PC-9 (cell line): ENCODE measurements at regions of chr6 and their contacts with region 1.

Region 1: DNA sequence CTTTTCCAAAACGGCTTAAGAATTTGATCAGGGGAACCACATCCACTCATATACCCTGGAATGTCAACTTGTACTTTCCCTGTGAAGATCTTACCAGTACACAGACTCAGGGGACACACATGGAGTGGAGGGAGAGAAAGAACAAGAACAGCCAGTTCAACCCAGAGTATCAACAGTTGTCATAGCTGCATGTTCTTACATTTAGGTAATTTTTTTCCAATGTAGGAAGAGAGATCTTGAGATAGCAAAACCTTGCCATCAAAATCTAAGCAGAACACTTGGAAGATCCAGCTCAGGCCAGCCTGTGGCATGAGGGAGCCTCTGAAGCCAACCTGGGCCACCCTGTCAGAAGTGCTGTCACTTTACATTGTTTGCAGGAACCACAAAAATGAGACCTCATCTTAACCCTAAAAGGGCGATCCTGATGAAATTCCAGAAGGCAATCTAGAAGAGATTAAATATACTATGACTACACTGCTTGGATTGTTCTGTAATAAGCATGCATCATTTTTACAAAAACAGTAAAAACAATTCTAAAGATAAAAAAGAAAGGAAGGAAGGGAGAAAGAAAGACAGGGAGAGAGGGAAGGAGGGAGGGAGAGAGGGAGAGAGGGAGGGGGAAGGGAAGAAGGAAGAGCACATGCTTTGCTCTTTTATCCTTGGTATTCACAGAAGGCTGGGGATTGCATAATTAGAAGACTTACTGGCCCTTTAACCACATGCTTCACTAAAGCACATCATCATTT is 124.7 kb upstream of the TCF21 start:
- DNase-seq: peak; percentile 43 to 61
- H3K4me3 ChIP-seq: no peak overlapping the region
- H3K27ac ChIP-seq: no peak overlapping the region
- H3K4me1 ChIP-seq: peaks cover 12% of the 10 kb centered on the region
- H3K27me3 ChIP-seq: no peaks in the 10 kb centered on the region
- CTCF ChIP-seq: no peak

Region 2: DNA sequence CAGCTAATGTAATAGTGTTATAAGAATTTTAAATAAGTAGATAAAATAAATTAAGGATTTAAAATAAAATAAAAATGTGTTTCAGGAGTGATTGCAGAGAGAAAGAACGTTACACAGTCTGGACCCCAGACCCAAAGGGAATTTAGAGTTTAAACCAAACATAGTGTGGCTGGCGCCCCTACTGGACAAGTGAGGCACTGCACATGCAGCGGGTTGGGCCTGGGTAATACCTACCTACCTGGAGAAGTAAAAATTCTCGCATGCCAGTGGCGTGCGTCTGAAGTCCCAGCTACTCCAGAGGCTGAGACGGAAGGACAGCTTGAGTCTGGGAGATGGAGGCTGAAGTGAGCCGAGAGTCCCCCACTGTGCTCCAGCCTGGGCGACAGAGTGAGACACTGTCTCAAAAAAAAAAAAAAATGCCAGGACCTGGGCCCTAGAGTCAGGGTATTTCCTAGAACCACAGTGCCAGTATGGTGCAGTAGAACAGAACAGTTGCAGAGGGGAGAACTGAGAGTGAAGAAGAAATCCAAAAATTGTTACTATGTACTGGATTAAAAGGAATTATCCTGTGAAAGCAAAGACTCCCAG is 53.4 kb after region 1 on chr6:
- CTCF ChIA-PET with region 1: interaction called, 10 read pairs
- POLR2A ChIA-PET with region 1: no interaction called
- intact Hi-C with region 1: no loop called
- DNase-seq: no peak
- H3K4me3 ChIP-seq: no peak overlapping the region
- H3K27ac ChIP-seq: no peak overlapping the region
- H3K4me1 ChIP-seq: no peaks in the 10 kb centered on the region
- H3K27me3 ChIP-seq: no peaks in the 10 kb centered on the region
- CTCF ChIP-seq: peak; percentile 70